WTC11 (cell line): ENCODE measurements at regions of chr4 and their contacts with region 1.

Region 1: DNA sequence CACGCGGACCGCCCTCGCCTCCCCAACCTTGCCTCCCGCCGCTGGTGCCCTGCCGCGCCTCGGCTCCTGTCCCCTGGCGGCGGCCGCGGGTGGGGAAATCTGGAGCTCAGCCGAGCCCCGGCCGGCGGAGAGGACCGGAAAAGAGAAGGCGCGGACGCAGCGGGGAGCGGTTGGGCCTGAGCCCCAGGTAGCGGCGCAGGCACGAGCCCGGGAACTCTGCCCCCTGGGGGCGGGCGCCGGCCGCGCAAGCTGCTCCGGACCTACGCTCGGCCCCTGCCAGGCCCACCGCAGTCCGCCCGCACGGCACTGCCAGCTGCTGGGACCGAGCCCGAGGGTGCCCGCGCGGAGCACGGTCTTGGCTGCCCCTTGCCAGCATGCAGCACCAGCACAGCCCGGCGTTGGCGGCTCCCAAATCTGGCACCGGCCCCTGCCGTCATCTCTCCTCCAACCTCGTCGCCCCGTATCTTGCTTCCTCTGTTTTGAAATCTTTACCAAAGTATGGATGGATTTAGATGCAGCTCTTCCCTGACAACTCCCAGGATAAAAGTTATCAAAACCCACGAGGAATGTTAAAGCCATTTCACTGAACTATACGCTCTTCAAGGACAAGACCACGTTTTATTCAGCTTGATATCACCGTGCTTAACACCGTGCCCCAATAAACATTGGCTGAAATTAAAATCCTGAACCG is at the start of gene PRSS12:
- DNase-seq: peak; percentile 87
- ATAC-seq: peak; percentile 83
- H3K4me3 Mint-ChIP-seq: peak within 1 kb of the TSS; percentile 80
- H3K27ac Mint-ChIP-seq: no peak within 1 kb of the TSS
- H3K4me1 Mint-ChIP-seq: peaks cover 41% of the 10 kb centered on the region
- H3K27me3 Mint-ChIP-seq: peaks cover 36% of the 10 kb centered on the region
- CTCF ChIP-seq: peak; percentile 78
- total RNA-seq, gene PRSS12: 8.4 to 14.1 TPM (median 10.5 TPM) in 3 replicates

Region 2: DNA sequence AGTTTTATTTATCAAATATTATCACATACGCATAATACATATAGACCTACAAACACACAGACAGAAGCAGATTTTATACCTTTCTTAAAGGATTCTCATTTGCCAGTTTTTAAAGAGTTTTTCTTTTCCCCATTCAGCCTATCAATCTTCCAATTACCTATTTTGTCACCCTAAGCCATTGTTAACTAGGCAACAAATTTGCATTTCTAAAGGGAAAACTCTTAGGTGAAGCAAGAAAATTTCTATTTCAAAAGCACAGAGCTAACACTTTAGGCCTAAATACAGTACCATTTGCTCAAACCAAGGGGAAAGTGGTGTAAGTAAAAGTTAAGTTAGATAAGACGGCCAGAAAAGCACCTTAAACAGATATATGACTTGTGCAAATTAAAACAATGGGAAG is 162.1 kb before region 1 on chr4:
- CTCF ChIA-PET with region 1: no interaction called
- POLR2A ChIA-PET with region 1: no interaction called
- DNase-seq: no peak
- ATAC-seq: peak; percentile 65
- H3K4me3 Mint-ChIP-seq: no peak overlapping the region
- H3K27ac Mint-ChIP-seq: peak overlapping the region; percentile 93
- H3K4me1 Mint-ChIP-seq: peaks cover 22% of the 10 kb centered on the region
- H3K27me3 Mint-ChIP-seq: no peaks in the 10 kb centered on the region; the same call in 1 of the 2 replicates
- CTCF ChIP-seq: no peak

Region 3: DNA sequence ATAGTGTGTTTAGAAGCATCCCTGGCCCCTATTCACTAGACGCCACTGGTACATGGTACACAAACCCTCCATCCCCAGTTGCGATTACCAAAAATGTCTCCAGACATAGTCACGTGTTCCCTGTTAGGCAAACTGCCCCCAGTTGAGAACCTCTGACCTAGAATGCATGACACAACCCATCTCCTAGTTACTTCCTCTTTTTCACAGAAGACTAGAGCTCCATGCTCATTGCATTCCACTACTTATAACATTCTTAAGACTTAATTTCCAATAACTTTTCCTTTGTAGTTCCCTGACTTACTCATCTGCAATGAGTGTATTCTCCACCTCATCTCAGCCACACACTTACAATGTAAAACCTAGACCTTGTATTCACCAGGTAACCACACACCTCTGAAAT is 68.8 kb before region 1 on chr4:
- CTCF ChIA-PET with region 1: interaction called, 16 read pairs
- POLR2A ChIA-PET with region 1: no interaction called
- DNase-seq: no peak
- ATAC-seq: no peak
- H3K4me3 Mint-ChIP-seq: no peak overlapping the region
- H3K27ac Mint-ChIP-seq: no peak overlapping the region
- H3K4me1 Mint-ChIP-seq: peaks cover 21% of the 10 kb centered on the region
- H3K27me3 Mint-ChIP-seq: no peaks in the 10 kb centered on the region
- CTCF ChIP-seq: no peak

Region 4: GRCh38 chr4:118313098-118313497 is 39.9 kb before region 1 on chr4:
- CTCF ChIA-PET with region 1: interaction called, 12 read pairs
- POLR2A ChIA-PET with region 1: no interaction called
- DNase-seq: no peak
- ATAC-seq: peak; percentile 82
- H3K4me3 Mint-ChIP-seq: no peak overlapping the region
- H3K27ac Mint-ChIP-seq: no peak overlapping the region
- H3K4me1 Mint-ChIP-seq: peaks cover 8% of the 10 kb centered on the region; the same call in 1 of the 2 replicates
- H3K27me3 Mint-ChIP-seq: no peaks in the 10 kb centered on the region
- CTCF ChIP-seq: no peak

Region 5: DNA sequence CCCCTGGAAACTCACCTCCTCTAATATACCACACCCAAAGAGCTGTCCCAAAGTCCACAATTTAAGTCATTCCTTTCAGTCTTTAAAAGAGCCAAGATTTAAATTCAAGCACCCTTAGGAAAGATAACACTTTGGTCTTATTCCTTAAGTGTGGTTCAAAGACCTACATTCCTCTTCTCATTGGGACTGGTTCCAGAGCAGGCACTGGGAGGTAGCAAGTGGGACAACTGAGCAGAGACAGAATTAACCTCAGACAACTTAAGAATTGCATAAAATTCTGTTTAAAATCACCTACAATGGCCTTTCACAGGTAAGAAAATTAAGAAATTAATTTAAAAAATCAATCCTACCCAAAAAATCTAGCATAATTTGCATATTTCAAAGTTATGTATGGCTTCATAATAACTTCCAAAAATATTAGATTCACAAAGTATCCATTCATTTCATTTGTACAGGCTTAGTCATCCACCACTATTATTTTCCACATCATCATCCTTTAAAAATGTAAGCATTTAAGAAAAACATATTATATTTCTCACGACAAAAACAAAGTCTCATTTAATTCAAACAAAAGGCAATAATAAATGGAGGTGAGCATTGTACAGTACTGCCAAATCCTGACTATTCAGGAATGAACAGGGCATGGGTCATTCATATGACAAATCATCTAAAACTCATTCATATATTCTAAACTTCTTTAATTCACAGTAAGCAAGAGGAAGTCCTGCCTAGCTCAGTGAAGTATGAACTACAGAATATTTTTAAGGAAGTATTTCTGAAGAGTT is 13.8 kb before region 1 on chr4:
- CTCF ChIA-PET with region 1: interaction called, 63 read pairs
- POLR2A ChIA-PET with region 1: no interaction called
- DNase-seq: no peak
- ATAC-seq: no peak
- H3K4me3 Mint-ChIP-seq: no peak overlapping the region
- H3K27ac Mint-ChIP-seq: no peak overlapping the region
- H3K4me1 Mint-ChIP-seq: peaks cover 38% of the 10 kb centered on the region
- H3K27me3 Mint-ChIP-seq: no peaks in the 10 kb centered on the region
- CTCF ChIP-seq: no peak

Region 6: GRCh38 chr4:118417325-118417724 is 64.3 kb after region 1 on chr4:
- CTCF ChIA-PET with region 1: interaction called, 10 read pairs
- POLR2A ChIA-PET with region 1: no interaction called
- DNase-seq: no peak
- ATAC-seq: no peak
- H3K4me3 Mint-ChIP-seq: no peak overlapping the region
- H3K27ac Mint-ChIP-seq: no peak overlapping the region
- H3K4me1 Mint-ChIP-seq: 0 out of 2 replicates have a peak, but pooled peaks cover 2% of the 10 kb centered on the region
- H3K27me3 Mint-ChIP-seq: no peaks in the 10 kb centered on the region
- CTCF ChIP-seq: no peak